Right ventricle myocardium inferior (tissue), 1 donor: ENCODE measurements at regions of chr10 and their contacts with region 1.

Region 1: DNA sequence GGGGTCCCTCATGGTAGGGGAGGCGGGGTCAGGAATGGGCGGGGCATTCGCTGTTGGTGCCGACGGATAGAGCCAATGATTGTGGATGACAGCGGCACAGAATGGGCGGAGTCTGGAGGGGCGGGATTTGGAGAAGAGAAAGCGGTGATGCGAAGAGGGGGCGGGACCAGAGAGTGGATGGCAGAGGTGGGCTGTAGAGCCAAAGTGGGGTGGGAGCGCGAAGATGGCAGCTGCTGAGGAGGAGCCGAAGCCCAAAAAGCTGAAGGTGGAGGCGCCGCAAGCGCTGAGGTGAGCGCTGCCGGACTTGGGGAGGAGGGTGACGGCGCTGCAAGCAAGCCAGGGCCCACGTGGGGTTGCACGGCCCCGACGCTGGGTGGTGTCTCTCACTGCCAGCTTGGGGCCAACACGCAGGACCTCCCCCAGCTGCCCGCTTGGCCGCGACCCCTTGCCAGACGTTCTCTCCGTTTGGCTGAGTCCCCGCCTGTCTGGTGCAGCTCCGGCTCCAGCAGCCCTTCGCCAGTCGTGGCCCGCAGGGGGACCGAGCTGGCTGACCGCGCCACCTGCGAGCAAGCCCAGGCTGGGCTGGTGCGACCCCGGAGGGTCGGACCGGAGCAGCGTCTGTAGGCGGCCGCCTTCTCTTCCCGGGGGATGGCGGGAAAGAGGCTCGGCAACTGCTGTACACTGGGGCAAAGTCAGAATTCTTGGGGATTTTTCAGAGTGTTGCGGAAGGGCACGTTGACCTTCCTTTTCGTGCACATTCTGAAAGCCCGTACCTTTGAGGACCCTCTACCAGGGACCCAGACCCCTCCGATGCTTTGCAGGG is at the start of gene ADK:
- DNase-seq: peak; percentile 100
- ATAC-seq: peak; percentile 98
- total RNA-seq, gene ADK: 41.4 TPM

Region 2: DNA sequence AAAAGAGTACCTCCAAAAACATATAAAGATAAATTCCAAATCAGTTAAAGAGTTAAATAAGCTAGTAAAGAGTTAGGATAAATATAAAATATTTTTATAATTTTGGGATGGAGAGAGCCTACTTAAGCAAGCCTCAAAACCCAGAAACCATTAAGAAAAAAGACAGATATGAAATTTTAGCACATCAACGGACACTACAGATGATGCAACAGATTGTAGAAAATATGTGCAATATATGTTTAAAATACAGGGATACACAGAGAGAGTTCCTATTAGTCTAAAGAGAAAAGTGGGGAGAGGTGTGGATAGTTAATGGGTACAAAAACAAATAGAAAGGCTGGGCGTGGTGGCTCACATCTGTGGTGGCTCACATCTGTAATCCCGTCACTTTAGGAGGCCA is 536.5 kb before region 1 on chr10:
- intact Hi-C with region 1: no loop called
- DNase-seq: no peak
- ATAC-seq: no peak

Region 3: DNA sequence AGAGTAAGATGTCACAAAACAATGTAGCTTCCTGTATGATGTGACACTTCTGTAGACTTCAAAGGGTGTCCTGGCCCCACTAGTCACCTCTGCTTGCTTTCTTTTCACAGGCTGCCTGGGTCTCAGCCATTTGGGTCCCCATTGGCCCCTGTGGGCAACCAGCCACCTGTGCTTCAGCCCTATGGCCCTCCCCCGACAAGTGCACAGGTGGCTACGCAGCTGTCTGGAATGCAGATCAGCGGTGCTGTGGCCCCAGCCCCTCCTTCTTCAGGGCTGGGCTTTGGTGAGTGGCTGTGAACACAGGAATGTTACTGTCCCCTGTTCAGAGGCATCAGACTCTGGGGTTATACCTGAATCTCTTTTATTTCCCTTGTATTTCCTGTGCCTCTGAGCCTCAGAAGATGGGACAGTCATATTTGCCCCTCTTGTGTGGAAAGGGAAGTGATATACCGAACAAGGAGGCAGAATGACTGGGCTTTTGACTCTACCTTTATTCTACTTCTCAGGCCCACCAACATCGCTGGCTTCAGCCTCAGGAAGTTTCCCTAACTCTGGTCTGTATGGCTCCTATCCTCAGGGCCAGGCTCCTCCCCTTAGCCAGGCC is 391.7 kb before region 1 on chr10:
- intact Hi-C with region 1: no loop called
- DNase-seq: no peak
- ATAC-seq: peak; percentile 26

Region 4: DNA sequence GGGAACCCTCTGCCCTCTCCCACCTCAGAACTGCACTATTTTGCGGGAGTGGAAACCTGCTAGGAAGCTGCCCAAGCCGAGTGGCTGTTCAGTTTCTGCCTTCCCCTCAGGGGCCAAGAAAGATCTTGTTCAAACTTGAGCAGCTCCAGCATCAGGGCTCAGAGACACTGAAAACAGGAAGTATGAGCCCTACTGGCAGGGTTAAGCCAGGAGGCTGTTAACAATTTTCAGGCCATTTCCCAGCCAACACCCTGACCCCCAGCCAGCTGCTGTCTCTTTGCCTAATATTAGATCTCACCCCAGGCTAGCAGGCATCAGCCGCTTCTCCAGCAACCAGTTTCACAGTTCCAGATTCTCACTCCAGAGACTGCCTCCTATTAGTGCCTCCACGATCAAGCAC is 231.2 kb before region 1 on chr10:
- intact Hi-C with region 1: no loop called
- DNase-seq: peak; percentile 74
- ATAC-seq: peak; percentile 93

Region 5: DNA sequence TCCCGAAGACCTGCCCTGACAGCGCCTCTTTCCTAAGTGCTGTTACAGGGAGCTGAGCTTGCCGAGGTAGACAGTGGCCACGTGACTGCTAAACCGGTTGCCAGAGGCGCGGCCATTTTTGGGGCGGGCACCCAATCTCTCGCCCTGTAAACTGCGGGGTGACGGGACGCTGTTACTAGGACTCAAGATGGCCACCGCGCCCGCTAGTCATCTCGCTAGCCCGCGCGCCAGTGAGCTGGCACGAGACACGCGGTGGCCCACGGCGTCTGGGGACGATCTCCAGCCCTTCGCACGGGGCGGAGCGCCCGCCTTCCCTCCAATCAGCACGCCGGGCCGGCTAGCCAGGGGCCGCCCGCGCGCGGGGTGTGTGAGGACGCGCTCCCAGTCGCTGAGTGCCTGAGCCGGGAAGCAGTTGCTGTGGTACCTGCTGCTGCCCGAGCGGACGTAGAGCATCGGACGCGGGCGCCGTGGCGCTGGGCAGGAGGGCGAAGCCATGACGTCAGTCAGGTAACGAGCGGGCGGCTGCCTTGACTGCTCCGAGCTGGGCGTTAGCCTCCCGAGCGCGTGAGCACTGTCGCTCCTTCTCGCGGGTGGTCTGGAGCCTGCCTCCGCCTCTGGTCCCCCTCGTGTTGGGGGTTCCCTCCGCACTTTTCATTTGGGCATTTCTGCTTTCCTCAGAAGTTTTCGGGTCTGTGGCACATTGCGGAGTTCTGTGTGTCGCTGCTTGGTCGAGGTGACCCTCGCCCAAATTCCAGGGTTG is 25.3 kb after region 1 on chr10:
- intact Hi-C with region 1: loop called (anchors 2 kb)
- DNase-seq: peak; percentile 99
- ATAC-seq: peak; percentile 99

Region 6: DNA sequence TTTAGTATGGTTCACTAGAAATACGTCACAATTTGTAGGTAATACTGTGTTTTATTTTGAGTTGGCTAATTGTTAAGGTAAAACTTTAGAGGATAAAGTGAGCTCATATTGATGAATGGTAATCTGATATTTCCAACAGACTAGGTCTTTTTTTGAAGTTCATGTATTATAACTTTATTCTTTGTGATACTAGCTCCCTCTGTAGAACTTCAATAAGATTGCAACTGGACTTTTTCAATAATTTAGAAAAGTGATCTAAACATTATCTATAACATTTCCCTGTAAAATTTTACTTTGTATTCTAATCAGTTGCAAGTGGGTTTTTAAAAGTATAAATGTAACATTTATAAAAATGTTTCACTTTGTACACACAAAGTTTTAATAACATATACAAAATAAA is 83.3 kb after region 1 on chr10:
- intact Hi-C with region 1: loop called (anchors 10 kb)
- DNase-seq: no peak
- ATAC-seq: no peak